ENCODE measurements at regions of chr2 and their contacts with region 1.

Region 1: DNA sequence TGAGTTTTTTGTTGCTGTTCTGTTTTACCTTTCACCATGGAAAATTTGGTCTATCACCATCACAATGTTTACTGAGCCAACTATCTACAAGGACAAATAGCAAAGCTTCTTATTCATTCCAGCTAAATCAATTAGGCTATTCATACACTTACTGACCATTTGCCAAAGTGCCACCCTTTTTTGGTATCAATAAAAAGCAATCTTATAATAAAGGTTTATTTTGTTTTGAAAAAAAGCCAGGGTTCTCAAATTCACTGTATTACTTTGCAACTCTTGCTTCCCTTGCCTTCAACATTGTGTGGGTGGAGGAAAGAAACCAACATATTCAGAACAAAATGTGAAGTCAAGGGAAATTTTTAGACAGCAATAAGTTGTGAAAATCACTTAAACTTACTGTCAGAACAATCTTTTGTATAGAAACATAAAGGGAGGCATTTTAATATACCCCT is 15.3 kb downstream of the PELI1 start:
- DNase-seq: no peak
- ATAC-seq: no peak
- H3K4me3 ChIP-seq: no peak overlapping the region
- H3K4me3 Mint-ChIP-seq: no peak overlapping the region
- H3K27ac ChIP-seq: no peak overlapping the region
- H3K27ac Mint-ChIP-seq: no peak overlapping the region
- H3K4me1 ChIP-seq: peaks cover 7% of the 10 kb centered on the region
- H3K4me1 Mint-ChIP-seq: peaks cover 62% of the 10 kb centered on the region
- H3K27me3 ChIP-seq: no peaks in the 10 kb centered on the region
- H3K27me3 Mint-ChIP-seq: no peaks in the 10 kb centered on the region
- CTCF ChIP-seq: no peak

Region 2: DNA sequence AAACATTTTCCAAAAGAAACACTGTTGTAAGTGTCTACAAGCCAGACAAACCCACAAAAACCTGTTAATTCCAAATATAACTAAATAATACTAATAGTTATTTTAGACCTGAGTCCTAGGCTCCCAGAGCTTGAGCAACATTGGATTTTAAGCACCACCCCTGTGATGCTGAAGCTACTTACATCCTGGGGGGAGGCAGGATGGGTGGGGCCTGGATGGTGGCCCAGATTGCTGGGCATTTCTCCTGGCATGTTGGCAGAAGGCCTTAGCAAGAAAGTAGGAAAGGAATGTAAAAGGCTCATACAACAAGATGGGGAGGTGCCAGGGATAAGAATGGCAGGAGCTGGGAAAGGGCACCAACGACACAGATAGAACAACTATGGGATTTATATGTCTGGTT is 1129.1 kb before region 1 on chr2:
- CTCF ChIA-PET with region 1: no interaction called
- POLR2A ChIA-PET with region 1: no interaction called
- intact Hi-C with region 1: no loop called
- DNase-seq: no peak
- ATAC-seq: no peak
- H3K4me3 ChIP-seq: no peak overlapping the region
- H3K4me3 Mint-ChIP-seq: no peak overlapping the region
- H3K27ac ChIP-seq: no peak overlapping the region
- H3K27ac Mint-ChIP-seq: no peak overlapping the region
- H3K4me1 ChIP-seq: no peaks in the 10 kb centered on the region
- H3K4me1 Mint-ChIP-seq: no peaks in the 10 kb centered on the region
- H3K27me3 ChIP-seq: no peaks in the 10 kb centered on the region
- H3K27me3 Mint-ChIP-seq: no peaks in the 10 kb centered on the region
- CTCF ChIP-seq: no peak

Region 3: DNA sequence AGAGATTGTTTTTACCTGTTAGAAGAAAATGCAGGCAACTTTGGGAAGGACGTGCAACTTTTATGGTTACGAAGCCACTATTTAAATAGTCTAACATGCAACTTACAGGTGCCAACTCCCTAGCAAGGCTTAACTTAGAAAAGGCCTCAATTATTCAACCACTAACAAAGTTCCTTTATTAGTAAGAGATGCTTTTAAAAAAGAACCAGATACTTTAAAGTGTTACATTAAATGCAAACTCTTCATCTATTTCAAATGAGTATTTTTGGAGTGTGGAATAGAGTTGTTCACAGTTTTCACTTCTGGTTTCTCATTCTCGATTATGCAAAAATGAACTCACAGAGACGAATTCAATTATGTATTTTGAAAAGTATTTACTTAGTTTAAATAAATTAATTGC is 36.5 kb before region 1 on chr2:
- CTCF ChIA-PET with region 1: no interaction called
- POLR2A ChIA-PET with region 1: no interaction called
- intact Hi-C with region 1: loop called in 1 of 2 experiments (anchors 1 kb)
- DNase-seq: no peak
- ATAC-seq: no peak
- H3K4me3 ChIP-seq: no peak overlapping the region
- H3K4me3 Mint-ChIP-seq: no peak overlapping the region
- H3K27ac ChIP-seq: no peak overlapping the region
- H3K27ac Mint-ChIP-seq: no peak overlapping the region
- H3K4me1 ChIP-seq: no peaks in the 10 kb centered on the region
- H3K4me1 Mint-ChIP-seq: peaks cover 6% of the 10 kb centered on the region
- H3K27me3 ChIP-seq: no peaks in the 10 kb centered on the region
- H3K27me3 Mint-ChIP-seq: no peaks in the 10 kb centered on the region
- CTCF ChIP-seq: no peak

Region 4: GRCh38 chr2:64622443-64623241 is 493.7 kb after region 1 on chr2:
- CTCF ChIA-PET with region 1: no interaction called
- POLR2A ChIA-PET with region 1: no interaction called
- intact Hi-C with region 1: no loop called
- DNase-seq: peak in 1 of 9 experiments; percentile 46
- ATAC-seq: no peak
- H3K4me3 ChIP-seq: no peak overlapping the region
- H3K4me3 Mint-ChIP-seq: no peak overlapping the region
- H3K27ac ChIP-seq: no peak overlapping the region
- H3K27ac Mint-ChIP-seq: no peak overlapping the region
- H3K4me1 ChIP-seq: no peaks in the 10 kb centered on the region
- H3K4me1 Mint-ChIP-seq: peaks cover 5% of the 10 kb centered on the region
- H3K27me3 ChIP-seq: no peaks in the 10 kb centered on the region
- H3K27me3 Mint-ChIP-seq: no peaks in the 10 kb centered on the region
- CTCF ChIP-seq: no peak

Measured in CD8-positive, alpha-beta T cell (primary cell).